CD14-positive monocyte (primary cell): ENCODE measurements at regions of chr9 and their contacts with region 1.

Region 1: GRCh38 chr9:7033076-7034045 is 275.6 kb downstream of the KDM4C start:
- DNase-seq: no peak
- H3K4me3 ChIP-seq: no peak overlapping the region
- H3K4me3 Mint-ChIP-seq: no peak overlapping the region
- H3K27ac ChIP-seq: no peak overlapping the region
- H3K27ac Mint-ChIP-seq: no peak overlapping the region
- H3K4me1 ChIP-seq: no peaks in the 10 kb centered on the region
- H3K4me1 Mint-ChIP-seq: no peaks in the 10 kb centered on the region
- H3K27me3 ChIP-seq: no peaks in the 10 kb centered on the region
- H3K27me3 Mint-ChIP-seq: peaks cover 0 to 3% (median 0%) of the 10 kb centered on the region in 3 donors
- CTCF ChIP-seq: no peak

Region 2: DNA sequence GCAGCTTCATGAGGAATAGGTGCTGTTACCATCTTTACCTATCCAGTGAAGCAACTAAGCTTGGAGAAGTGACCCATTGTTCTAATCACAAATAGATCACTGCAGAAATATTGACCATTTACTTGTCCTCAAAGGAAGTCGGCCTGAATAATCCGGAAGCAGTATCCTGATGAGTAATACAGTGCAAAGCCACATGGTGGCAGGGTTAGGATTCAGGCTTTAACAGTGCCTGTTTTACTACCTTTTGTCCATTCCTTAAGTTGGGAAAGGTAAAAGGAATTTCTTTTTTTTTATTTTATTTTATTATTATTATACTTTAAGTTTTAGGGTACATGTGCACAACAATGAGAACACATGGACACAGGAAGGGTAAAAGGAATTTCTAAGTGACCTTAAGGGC is 60.7 kb after region 1 on chr9:
- intact Hi-C with region 1: loop called in 1 of 2 experiments (anchors 10 kb)
- DNase-seq: no peak
- H3K4me3 ChIP-seq: no peak overlapping the region
- H3K4me3 Mint-ChIP-seq: no peak overlapping the region
- H3K27ac ChIP-seq: no peak overlapping the region
- H3K27ac Mint-ChIP-seq: peak overlapping the region in 2 of 7 donors; percentile 1 to 6
- H3K4me1 ChIP-seq: no peaks in the 10 kb centered on the region
- H3K4me1 Mint-ChIP-seq: peaks cover 8% of the 10 kb centered on the region
- H3K27me3 ChIP-seq: no peaks in the 10 kb centered on the region
- H3K27me3 Mint-ChIP-seq: no peaks in the 10 kb centered on the region
- CTCF ChIP-seq: no peak

Region 3: DNA sequence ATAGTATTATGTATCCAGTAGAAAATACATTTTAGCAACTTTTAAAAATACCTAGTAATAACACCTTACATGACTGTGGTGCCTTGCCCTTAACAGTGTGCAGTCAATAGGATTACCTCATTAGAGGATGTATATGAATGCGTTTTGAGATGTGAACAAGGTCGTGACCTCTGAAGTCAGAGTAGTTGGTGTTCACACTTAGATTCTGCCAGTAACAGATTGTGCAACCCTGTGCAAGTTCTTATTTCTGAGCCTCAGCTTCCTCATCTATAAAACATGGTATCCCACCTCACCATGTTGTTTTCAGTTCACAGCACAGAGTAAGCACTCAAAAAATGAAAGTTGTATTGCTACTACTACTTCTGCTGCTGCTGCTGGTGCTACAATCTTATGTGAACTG is 71.7 kb after region 1 on chr9:
- intact Hi-C with region 1: no loop called
- DNase-seq: peak; percentile 37 to 58 (median 51)
- H3K4me3 ChIP-seq: no peak overlapping the region
- H3K4me3 Mint-ChIP-seq: no peak overlapping the region
- H3K27ac ChIP-seq: peak overlapping the region in 1 of 2 donors; percentile 50
- H3K27ac Mint-ChIP-seq: peak overlapping the region in 4 of 7 donors; percentile 7 to 71 (median 48)
- H3K4me1 ChIP-seq: peaks cover 12% of the 10 kb centered on the region in 2 donors
- H3K4me1 Mint-ChIP-seq: peaks cover 17% of the 10 kb centered on the region
- H3K27me3 ChIP-seq: no peaks in the 10 kb centered on the region
- H3K27me3 Mint-ChIP-seq: no peaks in the 10 kb centered on the region
- CTCF ChIP-seq: no peak